Heart left ventricle (tissue), 16 donors: ENCODE measurements at regions of chr15 and their contacts with region 1.

Region 1: DNA sequence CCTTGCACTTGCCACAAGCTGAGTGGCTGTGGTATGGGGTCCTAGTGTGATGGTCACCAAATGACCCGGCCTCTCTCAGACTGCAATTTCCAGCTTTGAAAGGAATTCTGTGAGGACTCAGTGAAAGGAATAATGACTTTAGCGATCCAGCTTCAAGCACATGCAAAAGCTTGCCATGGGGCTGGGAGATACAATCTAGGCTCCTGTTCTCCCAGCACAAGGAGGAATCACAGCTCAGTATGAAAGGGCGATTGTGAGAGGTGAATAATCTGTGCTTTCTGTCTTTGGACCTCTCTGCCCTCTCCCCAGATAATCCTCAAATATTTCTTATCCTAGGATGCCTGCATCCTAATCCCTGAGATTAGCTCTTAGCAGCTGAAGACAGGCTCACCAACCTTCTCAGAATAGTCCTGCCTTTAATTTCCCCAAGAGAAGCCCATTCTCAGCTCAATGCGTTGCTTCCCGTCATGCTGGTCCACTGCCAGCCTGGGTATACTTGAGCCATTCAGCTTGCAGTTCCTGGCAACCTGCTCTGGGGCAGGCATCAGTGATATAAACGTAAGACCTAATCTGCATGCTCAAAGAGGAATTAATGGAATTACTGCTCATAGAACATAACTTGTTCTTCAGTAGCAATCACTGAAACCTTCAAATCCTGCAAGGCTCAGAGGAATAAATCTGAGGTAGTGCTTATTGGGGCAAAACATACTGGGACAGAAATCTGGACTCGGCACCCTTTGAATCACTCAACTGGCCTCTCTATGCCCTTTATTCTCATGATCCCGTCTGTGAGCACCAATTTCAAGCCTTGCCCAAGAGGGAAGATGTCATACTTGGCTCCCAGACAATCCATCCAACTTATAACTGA is 15.1 kb downstream of the TLNRD1 start:
- DNase-seq: no peak
- ATAC-seq: peak in 2 of 4 donors; percentile 47 to 49
- H3K4me3 ChIP-seq: no peak overlapping the region
- H3K27ac ChIP-seq: peak overlapping the region in 8 of 12 donors; percentile 1 to 52 (median 22)
- H3K4me1 ChIP-seq: peaks cover 0 to 45% (median 36%) of the 10 kb centered on the region in 12 donors
- H3K27me3 ChIP-seq: no peaks in the 10 kb centered on the region
- CTCF ChIP-seq: no peak
- POLR2A ChIP-seq: no peak

Region 2: GRCh38 chr15:80825376-80826015 is 190.4 kb before region 1 on chr15:
- intact Hi-C with region 1: no loop called
- DNase-seq: peak in 1 of 5 donors; percentile 52
- ATAC-seq: peak in 3 of 4 donors; percentile 67 to 84 (median 80)
- H3K4me3 ChIP-seq: no peak overlapping the region
- H3K27ac ChIP-seq: no peak overlapping the region
- H3K4me1 ChIP-seq: peaks cover 0 to 5% (median 0%) of the 10 kb centered on the region in 12 donors
- H3K27me3 ChIP-seq: no peaks in the 10 kb centered on the region
- CTCF ChIP-seq: no peak
- POLR2A ChIP-seq: no peak

Region 3: DNA sequence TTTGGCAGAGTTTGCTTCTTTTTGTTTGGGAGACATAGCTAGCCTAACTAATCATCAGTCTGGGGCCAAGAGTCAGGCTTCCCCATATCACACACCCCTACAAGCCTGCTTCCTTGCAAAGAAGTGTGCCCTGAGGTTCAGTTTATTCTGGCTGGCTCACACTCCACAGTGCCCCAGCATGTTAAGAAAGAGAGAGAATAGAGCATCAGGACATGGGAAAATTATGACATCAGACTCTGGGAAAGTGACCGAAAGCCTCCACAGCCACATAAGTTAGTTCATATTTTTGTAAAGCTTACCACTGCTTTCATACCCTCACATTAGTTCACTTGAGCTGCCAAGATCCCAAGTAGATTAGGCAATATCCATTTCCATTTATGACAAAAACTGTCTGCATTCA is 55.3 kb after region 1 on chr15:
- intact Hi-C with region 1: loop called in 1 of 10 experiments (anchors 10 kb)
- DNase-seq: no peak
- ATAC-seq: peak in 2 of 4 donors; percentile 41 to 45
- H3K4me3 ChIP-seq: no peak overlapping the region
- H3K27ac ChIP-seq: no peak overlapping the region
- H3K4me1 ChIP-seq: peaks cover 0 to 29% (median 9%) of the 10 kb centered on the region in 12 donors
- H3K27me3 ChIP-seq: no peaks in the 10 kb centered on the region
- CTCF ChIP-seq: no peak
- POLR2A ChIP-seq: no peak